Common myeloid progenitor, CD34-positive (primary cell): ENCODE measurements at regions of chr17 and their contacts with region 1.

Region 1: GRCh38 chr17:28763804-28764266 is 20.0 kb downstream of the TRAF4 start:
- DNase-seq: peak; percentile 78 to 89 (median 82)
- H3K4me3 ChIP-seq: no peak overlapping the region
- H3K27ac ChIP-seq: no peak overlapping the region
- H3K4me1 ChIP-seq: peaks cover 3 to 15% (median 13%) of the 10 kb centered on the region in 4 experiments
- H3K27me3 ChIP-seq: no peaks in the 10 kb centered on the region

Region 2: DNA sequence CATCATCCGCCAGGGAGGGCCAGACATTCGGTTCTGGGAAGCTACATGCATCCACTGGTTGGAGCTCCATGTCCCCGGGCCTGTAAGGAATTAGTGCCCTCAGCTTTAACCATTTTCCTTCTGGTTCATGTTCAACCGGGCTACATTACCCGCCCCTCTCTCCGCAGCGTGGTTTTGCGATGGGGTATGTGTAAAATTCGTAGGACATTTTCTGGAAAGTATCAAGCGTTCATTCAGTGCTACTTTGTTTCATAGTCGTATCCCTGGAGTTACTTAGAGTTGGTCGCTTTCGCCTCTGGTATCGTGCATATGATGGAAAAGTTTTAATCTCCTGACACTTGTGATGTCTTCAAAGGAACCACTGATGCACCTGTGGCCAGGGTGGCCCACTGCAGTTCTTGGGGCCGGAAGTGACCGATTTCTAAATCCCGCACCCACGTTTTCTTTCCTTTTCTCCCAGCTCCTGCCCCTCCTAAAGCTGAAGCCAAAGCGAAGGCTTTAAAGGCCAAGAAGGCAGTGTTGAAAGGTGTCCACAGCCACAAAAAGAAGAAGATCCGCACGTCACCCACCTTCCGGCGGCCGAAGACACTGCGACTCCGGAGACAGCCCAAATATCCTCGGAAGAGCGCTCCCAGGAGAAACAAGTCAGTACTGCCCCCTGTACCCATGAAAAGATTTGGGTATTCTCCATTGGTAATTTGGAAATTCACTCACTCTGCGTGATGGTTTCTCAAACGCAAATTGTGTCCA is 43.4 kb before region 1 on chr17:
- CTCF ChIA-PET with region 1: interaction called, 84 read pairs
- POLR2A ChIA-PET with region 1: interaction called, 4 read pairs
- DNase-seq: no peak
- H3K4me3 ChIP-seq: peak overlapping the region; percentile 79 to 98 (median 91)
- H3K27ac ChIP-seq: peak overlapping the region; percentile 83 to 91
- H3K4me1 ChIP-seq: peaks cover 13 to 62% (median 58%) of the 10 kb centered on the region in 4 experiments
- H3K27me3 ChIP-seq: no peaks in the 10 kb centered on the region

Region 3: GRCh38 chr17:28750178-28751047 is 13.4 kb before region 1 on chr17:
- CTCF ChIA-PET with region 1: interaction called, 75 read pairs
- POLR2A ChIA-PET with region 1: interaction called, 4 read pairs
- DNase-seq: peak; percentile 89 to 93 (median 90)
- H3K4me3 ChIP-seq: no peak overlapping the region
- H3K27ac ChIP-seq: no peak overlapping the region
- H3K4me1 ChIP-seq: peaks cover 0 to 30% (median 24%) of the 10 kb centered on the region in 4 experiments
- H3K27me3 ChIP-seq: no peaks in the 10 kb centered on the region

Region 4: GRCh38 chr17:28788100-28788499 is 24.3 kb after region 1 on chr17:
- CTCF ChIA-PET with region 1: interaction called, 14 read pairs
- POLR2A ChIA-PET with region 1: no interaction called
- DNase-seq: no peak
- H3K4me3 ChIP-seq: no peak overlapping the region
- H3K27ac ChIP-seq: no peak overlapping the region
- H3K4me1 ChIP-seq: peaks cover 0 to 4% (median under 1%) of the 10 kb centered on the region in 4 experiments
- H3K27me3 ChIP-seq: no peaks in the 10 kb centered on the region

Region 5: DNA sequence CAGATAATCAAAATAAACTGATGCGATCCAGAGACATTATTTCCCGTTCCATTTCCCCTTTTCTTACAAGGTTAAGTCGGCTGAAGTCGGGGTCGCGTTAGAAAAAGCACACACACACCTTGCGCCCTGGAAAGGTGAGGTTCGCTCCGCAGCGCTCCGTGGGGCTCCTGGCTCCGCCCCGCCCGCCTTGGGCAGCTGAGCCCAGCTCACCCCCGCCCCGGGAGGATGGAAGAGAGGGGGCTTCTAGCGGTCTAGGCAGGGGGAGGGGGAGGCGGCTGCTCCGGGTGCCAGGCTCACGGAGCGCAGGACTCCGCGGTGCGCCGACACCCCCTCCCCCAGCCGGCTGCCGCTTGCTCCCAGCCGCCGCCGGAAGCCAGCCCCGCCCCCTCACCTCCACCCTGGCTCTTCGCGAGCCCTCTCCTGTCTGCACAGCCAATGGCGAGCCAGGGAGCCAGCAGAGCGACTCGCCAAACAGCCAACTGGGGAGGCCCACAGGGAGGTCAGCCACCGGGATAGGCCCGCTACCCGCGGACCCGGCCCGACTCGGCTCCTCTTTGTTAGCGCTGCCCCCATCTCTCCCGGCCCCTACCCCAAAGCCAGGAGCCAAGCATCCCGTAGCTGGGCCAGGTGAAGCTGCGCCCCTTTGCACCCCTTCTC is 48.4 kb after region 1 on chr17:
- CTCF ChIA-PET with region 1: interaction called, 11 read pairs
- POLR2A ChIA-PET with region 1: no interaction called
- DNase-seq: peak; percentile 96 to 98 (median 98)
- H3K4me3 ChIP-seq: peak overlapping the region; percentile 82 to 95 (median 90)
- H3K27ac ChIP-seq: peak overlapping the region; percentile 90 to 97
- H3K4me1 ChIP-seq: peaks cover 18 to 51% (median 31%) of the 10 kb centered on the region in 4 experiments
- H3K27me3 ChIP-seq: no peaks in the 10 kb centered on the region

Region 6: DNA sequence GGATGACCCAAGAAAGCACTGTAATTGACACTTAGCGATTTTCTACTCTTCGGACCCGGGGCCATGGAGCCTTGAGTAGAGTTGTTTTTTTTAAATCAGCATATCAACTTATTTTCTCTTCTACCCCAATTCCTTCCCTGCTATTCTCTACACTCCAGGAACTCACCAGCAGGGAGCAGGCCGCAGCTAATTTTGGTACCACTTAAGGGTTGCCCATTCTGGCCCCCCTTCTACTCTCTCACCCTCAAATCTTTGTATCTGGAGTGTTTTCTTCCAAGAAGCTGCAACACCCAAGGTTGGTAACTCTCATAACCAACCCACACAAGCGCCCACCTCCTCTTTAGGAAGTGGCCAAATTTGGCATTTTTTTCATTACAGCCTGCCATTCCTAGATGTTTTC is 85.4 kb after region 1 on chr17:
- CTCF ChIA-PET with region 1: interaction called, 31 read pairs
- POLR2A ChIA-PET with region 1: no interaction called
- DNase-seq: peak; percentile 75 to 86 (median 85)
- H3K4me3 ChIP-seq: no peak overlapping the region
- H3K27ac ChIP-seq: no peak overlapping the region
- H3K4me1 ChIP-seq: peaks cover 0 to 3% (median 3%) of the 10 kb centered on the region in 4 experiments
- H3K27me3 ChIP-seq: no peaks in the 10 kb centered on the region

Region 7: GRCh38 chr17:28896884-28897768 is 133.3 kb after region 1 on chr17 and contains the start of gene FLOT2:
- CTCF ChIA-PET with region 1: interaction called, 19 read pairs
- POLR2A ChIA-PET with region 1: no interaction called
- DNase-seq: peak; percentile 42 to 74 (median 69)
- H3K4me3 ChIP-seq: peak within 1 kb of the TSS; percentile 75 to 90 (median 85)
- H3K27ac ChIP-seq: peak within 1 kb of the TSS; percentile 58 to 86
- H3K4me1 ChIP-seq: peaks cover 22 to 62% (median 55%) of the 10 kb centered on the region in 4 experiments
- H3K27me3 ChIP-seq: no peaks in the 10 kb centered on the region